ENCODE measurements at regions of chr1 and their contacts with region 1.

Region 1: GRCh38 chr1:43946236-43947060 is at the start of gene IPO13:
- DNase-seq: peak; percentile 97
- H3K4me3 Mint-ChIP-seq: peak within 1 kb of the TSS; percentile 90
- H3K27ac Mint-ChIP-seq: peak within 1 kb of the TSS; percentile 88
- H3K4me1 Mint-ChIP-seq: peaks cover 39% of the 10 kb centered on the region
- H3K27me3 Mint-ChIP-seq: no peaks in the 10 kb centered on the region
- total RNA-seq, gene IPO13: 8.0 to 12.4 TPM

Region 2: GRCh38 chr1:43367904-43368645 is 578.4 kb before region 1 on chr1 and contains the start of gene ELOVL1:
- CTCF ChIA-PET with region 1: no interaction called
- intact Hi-C with region 1: loop called (anchors 10 kb)
- DNase-seq: peak; percentile 91
- H3K4me3 Mint-ChIP-seq: peak within 1 kb of the TSS; percentile 88
- H3K27ac Mint-ChIP-seq: peak within 1 kb of the TSS; percentile 87
- H3K4me1 Mint-ChIP-seq: peaks cover 35% of the 10 kb centered on the region
- H3K27me3 Mint-ChIP-seq: no peaks in the 10 kb centered on the region
- total RNA-seq, gene ELOVL1: 42.8 to 44.2 TPM

Region 3: GRCh38 chr1:43644558-43644957 is 301.9 kb before region 1 on chr1:
- CTCF ChIA-PET with region 1: no interaction called
- intact Hi-C with region 1: no loop called
- DNase-seq: no peak
- H3K4me3 Mint-ChIP-seq: no peak overlapping the region
- H3K27ac Mint-ChIP-seq: no peak overlapping the region
- H3K4me1 Mint-ChIP-seq: peaks cover 3% of the 10 kb centered on the region
- H3K27me3 Mint-ChIP-seq: peaks cover 5% of the 10 kb centered on the region

Region 4: GRCh38 chr1:43706598-43707495 is 239.6 kb before region 1 on chr1:
- CTCF ChIA-PET with region 1: no interaction called
- intact Hi-C with region 1: loop called (anchors 1 kb)
- DNase-seq: peak; percentile 94
- H3K4me3 Mint-ChIP-seq: peak overlapping the region; percentile 86
- H3K27ac Mint-ChIP-seq: peak overlapping the region; percentile 53
- H3K4me1 Mint-ChIP-seq: peaks cover 30% of the 10 kb centered on the region
- H3K27me3 Mint-ChIP-seq: no peaks in the 10 kb centered on the region

Region 5: DNA sequence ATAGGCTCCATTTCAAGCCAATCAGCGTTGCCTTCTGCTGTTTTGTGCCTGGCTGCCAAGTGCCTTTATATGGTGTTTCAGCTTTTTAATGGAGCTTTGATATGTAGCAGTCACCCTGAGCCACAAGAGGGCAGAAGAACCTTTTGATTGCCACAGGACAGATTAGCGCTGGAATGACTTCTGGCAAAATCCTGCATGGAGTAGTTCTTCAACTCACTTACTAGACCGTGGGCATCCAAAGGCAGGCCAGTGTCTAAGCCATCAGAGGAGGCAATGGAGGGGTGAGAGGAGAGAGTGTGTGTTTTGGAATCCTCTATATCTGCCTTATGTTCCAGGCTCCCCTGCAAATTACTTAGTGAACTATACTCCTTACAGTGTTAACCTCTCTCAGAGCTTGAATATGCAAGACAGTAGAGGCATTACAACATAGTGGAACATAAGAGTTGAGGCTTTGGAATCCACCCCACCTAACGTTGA is 182.9 kb before region 1 on chr1:
- CTCF ChIA-PET with region 1: interaction called, 39 read pairs
- intact Hi-C with region 1: loop called (anchors 1 kb)
- DNase-seq: peak; percentile 68
- H3K4me3 Mint-ChIP-seq: no peak overlapping the region
- H3K27ac Mint-ChIP-seq: no peak overlapping the region
- H3K4me1 Mint-ChIP-seq: no peaks in the 10 kb centered on the region
- H3K27me3 Mint-ChIP-seq: no peaks in the 10 kb centered on the region

Region 6: GRCh38 chr1:43974443-43975248 is 28.2 kb after region 1 on chr1 and contains the start of gene ATP6V0B:
- CTCF ChIA-PET with region 1: interaction called, 7 read pairs
- intact Hi-C with region 1: loop called (anchors 1 kb)
- DNase-seq: peak; percentile 97
- H3K4me3 Mint-ChIP-seq: peak within 1 kb of the TSS; percentile 85
- H3K27ac Mint-ChIP-seq: peak within 1 kb of the TSS; percentile 75
- H3K4me1 Mint-ChIP-seq: peaks cover 50% of the 10 kb centered on the region
- H3K27me3 Mint-ChIP-seq: no peaks in the 10 kb centered on the region
- total RNA-seq, gene ATP6V0B: 44.2 to 52.6 TPM

Region 7: DNA sequence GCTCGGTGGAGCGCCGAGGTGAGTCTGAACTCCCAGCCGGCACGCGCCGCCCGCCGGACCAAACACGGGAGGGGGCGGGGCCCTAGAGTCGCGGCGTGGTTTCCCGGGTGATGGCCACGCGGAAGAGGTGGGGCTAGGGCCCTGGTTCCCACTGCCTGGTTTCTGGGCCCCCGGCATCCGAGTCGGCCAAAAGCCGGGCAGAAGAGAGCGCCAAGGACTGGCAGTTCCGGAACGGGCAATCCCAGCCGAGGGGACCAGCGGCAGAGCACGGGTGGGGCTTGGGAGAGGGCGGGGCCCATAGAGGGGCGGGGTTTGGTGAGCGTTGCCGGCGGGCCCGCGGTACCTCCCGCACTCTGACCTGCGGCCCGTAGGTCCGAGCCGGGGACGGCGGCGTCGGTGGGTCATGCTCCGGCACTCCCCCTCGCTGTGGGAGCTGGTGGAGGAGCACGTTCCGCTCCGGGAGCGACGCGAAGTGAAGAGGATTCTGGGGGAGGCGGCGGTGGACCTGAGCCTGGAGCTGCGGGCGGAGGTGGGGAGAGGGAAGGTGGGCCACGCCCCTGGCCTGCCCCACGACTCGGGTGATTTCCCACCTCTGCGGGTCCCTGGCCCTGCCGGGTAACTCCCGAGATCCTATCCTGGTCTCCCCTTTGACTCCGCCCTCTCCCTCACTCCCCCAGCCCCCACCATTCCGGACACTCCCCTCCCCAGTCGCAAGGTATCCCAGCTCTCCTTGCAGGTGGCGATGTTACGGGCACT is 45.2 kb after region 1 on chr1 and contains the start of gene CCDC24:
- CTCF ChIA-PET with region 1: interaction called, 4 read pairs
- intact Hi-C with region 1: loop called (anchors 1 kb)
- DNase-seq: peak; percentile 74
- H3K4me3 Mint-ChIP-seq: peak within 1 kb of the TSS; percentile 89
- H3K27ac Mint-ChIP-seq: peak within 1 kb of the TSS; percentile 53
- H3K4me1 Mint-ChIP-seq: peaks cover 5% of the 10 kb centered on the region
- H3K27me3 Mint-ChIP-seq: no peaks in the 10 kb centered on the region
- total RNA-seq, gene CCDC24: 0.91 to 1.6 TPM

Region 8: DNA sequence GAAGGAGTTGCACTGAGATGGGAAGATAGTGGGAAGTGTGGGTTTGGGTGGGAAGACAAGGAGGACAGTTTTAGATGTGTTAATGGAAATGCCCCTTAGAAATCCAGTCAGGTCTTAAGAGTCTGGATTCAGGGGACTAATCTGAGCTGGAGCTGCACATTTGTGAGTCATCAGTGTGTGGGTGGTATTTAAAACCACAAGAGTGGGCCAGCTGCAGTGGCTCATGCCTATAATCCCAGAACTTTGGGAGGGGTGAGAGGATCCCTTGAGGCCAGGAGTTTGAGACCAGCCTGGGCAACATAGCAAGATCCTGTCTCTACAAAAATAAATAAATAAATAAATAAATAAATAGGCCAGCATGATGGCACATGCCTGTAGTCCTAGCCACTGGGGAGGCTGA is 125.8 kb after region 1 on chr1:
- CTCF ChIA-PET with region 1: no interaction called
- intact Hi-C with region 1: no loop called
- DNase-seq: no peak
- H3K4me3 Mint-ChIP-seq: no peak overlapping the region
- H3K27ac Mint-ChIP-seq: no peak overlapping the region
- H3K4me1 Mint-ChIP-seq: peaks cover 2% of the 10 kb centered on the region
- H3K27me3 Mint-ChIP-seq: peaks cover 15% of the 10 kb centered on the region